Mucosa of descending colon (tissue), 3 donors: ENCODE measurements at regions of chr7 and their contacts with region 1.

Region 1: GRCh38 chr7:106041140-106041717 is 70.9 kb downstream of the SYPL1 start:
- DNase-seq: peak in 1 of 3 donors; percentile 46
- ATAC-seq: peak; percentile 64
- H3K4me3 ChIP-seq: no peak overlapping the region
- H3K4me1 ChIP-seq: peaks cover 6% of the 10 kb centered on the region
- CTCF ChIP-seq: peak; percentile 54

Region 2: DNA sequence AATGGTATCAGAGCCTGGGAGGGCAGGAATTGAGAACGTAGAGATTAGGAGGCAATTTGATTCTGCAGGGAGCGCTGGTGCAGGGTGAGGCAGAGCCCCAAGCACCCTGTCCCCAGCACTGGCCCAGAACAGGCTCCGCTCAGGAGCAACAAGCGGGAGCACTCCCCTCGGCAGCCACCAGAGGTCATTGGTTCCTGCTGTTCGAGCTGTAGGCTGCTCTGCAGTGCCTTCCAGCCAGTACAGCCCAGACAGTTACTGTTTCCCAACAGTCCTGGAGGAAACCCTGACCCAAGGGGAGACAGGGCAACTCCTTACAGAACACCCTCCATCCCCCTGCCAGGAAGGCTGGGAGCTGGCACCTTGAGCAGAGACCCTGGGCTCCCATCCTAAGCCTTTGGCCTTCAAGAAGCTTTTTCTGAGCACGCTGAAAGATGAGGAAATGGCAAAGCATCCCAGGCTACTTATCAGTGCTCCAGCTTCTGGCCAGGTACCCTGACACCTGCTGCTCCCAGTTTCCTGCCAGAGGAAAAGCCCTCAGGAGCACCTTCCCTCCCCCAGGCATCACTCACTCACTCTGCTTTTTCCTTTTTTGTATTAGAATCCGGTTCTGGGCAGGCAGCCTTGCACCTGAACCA is 388.8 kb before region 1 on chr7:
- intact Hi-C with region 1: loop called (anchors 5 to 10 kb)
- DNase-seq: peak; percentile 73 to 88 (median 85)
- ATAC-seq: peak; percentile 88
- H3K4me3 ChIP-seq: no peak overlapping the region
- H3K4me1 ChIP-seq: no peaks in the 10 kb centered on the region
- CTCF ChIP-seq: peak; percentile 87

Region 3: DNA sequence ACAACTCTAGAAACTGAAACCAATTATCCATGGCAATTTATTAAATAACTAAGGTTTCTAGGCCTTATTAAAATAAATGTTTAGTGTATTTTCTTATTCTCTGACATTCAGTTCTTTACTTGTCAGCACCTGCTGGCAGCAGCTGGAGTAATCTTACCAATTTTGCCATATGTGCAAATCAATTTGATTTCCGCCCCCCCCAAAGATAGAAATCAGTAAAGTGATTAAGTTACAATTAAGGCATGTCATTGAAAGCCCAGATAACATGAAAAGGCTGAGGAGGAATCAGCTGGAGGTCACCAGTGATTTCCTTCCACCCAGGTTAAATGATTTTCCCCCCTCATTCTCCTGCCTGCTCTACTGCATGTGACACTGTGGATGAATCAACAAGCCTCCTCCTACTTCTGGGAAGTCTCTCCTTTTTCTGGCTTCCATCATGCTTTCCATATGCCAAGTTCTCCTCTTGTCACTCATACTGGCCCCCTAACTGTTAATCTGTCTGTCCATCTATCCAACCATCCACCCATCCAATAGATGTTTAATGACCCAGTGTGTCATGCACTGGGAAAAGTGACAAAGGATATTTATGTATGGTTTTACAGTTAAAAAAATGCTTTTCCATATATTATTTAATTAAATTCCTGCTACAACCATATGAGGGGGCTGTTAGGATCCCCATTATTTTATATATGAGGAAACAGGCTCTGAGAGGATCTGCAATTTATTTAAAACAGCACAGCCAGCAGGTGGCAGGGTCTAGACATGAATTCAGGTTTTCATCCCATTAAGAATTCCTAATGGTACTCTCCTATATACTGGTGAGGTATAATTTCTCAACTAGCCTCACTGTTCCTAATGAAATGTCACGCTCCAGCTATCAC is 281.3 kb before region 1 on chr7:
- intact Hi-C with region 1: loop called (anchors 5 to 10 kb)
- DNase-seq: peak in 2 of 3 donors; percentile 40 to 82
- ATAC-seq: peak; percentile 37
- H3K4me3 ChIP-seq: no peak overlapping the region
- H3K4me1 ChIP-seq: no peaks in the 10 kb centered on the region
- CTCF ChIP-seq: no peak

Region 4: DNA sequence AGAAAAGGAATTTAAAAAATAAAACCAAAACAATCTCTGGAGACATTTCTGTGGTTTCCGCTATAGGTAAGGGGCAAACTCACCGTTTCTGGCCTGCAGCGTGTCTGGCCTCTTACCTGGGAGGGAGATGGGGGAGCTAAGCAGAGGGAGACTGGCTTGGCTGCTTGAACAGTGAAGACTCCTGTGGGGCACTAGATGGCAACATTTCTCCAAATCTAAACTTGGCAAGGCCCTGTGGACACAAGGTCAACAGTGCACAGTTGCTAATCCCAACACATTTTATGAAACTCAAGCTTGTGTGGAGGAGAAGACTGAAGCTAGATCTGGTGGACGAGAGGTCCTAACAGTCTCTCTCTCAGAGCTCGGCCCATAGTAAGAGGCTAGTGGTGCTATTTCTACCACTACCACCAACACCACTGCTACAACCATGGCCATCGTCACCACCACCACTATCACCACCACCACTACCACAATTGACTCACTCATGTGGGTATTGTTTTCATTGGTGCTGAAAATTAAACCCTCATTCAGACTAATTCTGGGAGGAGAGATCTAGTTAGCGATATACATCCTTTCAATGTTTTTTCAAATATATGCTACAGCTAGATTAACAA is 106.5 kb before region 1 on chr7:
- intact Hi-C with region 1: loop called in 1 of 2 experiments (anchors 5 kb)
- DNase-seq: peak in 1 of 3 donors; percentile 11
- ATAC-seq: peak; percentile 78
- H3K4me3 ChIP-seq: no peak overlapping the region
- H3K4me1 ChIP-seq: peaks cover 2% of the 10 kb centered on the region
- CTCF ChIP-seq: no peak

Region 5: GRCh38 chr7:106126170-106126938 is 85.1 kb after region 1 on chr7:
- intact Hi-C with region 1: no loop called
- DNase-seq: peak in 1 of 3 donors; percentile 74
- ATAC-seq: peak; percentile 60
- H3K4me3 ChIP-seq: no peak overlapping the region
- H3K4me1 ChIP-seq: no peaks in the 10 kb centered on the region
- CTCF ChIP-seq: no peak